ENCODE measurements at regions of chr18 and their contacts with region 1.

Region 1: DNA sequence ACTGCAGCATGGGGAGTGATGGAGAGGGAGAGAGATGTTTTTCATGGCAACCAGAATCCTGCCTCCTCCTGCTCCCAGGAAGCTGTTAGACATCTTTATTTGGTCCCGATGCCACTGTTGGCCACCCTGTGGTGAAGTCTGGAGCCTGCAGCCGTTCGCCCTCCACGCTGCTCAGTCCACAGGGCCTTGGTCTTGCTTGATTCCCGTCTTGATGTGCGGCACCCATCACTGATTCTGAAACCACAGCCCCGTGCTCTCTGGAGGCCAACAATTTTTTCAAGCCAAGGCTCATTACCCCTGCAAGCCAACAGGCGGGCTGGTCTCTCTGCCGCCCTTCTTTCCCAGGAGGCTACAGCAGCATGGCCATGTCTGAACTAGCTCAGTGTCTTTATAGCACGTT is 24.5 kb downstream of the SIGLEC15 start:
- ATAC-seq: peak in 7 of 8 experiments; percentile 35 to 70 (median 49)
- H3K4me3 ChIP-seq: no peak overlapping the region
- H3K27ac ChIP-seq: no peak overlapping the region
- H3K4me1 ChIP-seq: no peaks in the 10 kb centered on the region

Region 2: GRCh38 chr18:45291621-45292615 is 558.1 kb before region 1 on chr18:
- in situ Hi-C with region 1: no loop called
- ATAC-seq: peak in 7 of 8 experiments; percentile 79 to 97 (median 93)
- H3K4me3 ChIP-seq: no peak overlapping the region
- H3K27ac ChIP-seq: peak overlapping the region; percentile 28 to 29
- H3K4me1 ChIP-seq: peaks cover 14 to 25% of the 10 kb centered on the region in 2 donors

Region 3: GRCh38 chr18:45722899-45723298 is 127.1 kb before region 1 on chr18:
- in situ Hi-C with region 1: loop called in 1 of 9 experiments (anchors 25 kb)
- ATAC-seq: peak; percentile 36 to 99 (median 72)
- H3K4me3 ChIP-seq: no peak overlapping the region
- H3K27ac ChIP-seq: no peak overlapping the region
- H3K4me1 ChIP-seq: no peaks in the 10 kb centered on the region

Measured in motor neuron (in vitro differentiated cells).